GM10248 (cell line): ENCODE measurements at regions of chr3 and their contacts with region 1.

Region 1: DNA sequence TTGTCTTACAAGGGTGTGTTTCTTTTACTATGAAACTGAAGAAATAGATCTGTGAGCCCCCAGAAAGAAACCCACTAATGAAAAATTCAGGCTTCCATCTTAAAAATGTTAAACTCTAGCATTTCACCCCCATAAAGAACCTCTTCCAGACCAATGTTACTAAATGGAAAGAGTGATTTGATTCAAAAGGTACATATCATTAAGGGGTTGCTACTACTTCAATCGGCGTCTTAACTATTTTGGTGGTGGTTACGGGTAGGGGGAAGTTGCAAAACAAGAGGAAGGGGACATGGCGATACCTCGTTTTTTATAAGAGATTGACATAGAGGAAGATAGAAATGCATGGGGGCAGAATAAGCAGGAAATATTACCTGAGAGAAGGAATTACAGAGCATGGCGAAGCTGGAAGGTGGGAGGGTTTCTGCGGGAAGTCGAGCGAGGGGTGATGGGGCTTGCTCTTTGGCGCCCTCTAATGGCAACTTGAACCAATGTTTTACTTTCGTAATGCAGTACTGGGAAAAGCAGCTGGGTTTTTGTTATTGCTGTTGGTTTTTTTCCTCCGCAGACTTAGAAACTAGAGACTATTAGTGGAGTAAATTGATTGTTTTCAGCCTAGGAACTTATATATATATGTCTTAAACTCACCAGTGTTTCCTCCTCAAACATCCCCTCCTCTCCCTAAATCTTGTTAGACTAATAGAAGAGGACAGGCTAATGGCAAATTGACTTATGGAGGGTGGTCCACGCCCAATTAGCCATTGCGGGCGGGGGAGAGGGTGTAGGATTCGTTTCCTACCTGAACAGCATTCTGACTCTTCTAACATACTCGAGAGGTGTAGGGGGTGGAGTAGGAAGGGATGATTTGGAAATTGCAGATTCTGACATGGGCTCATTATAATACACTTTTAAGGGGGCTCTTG is 11.3 kb upstream of the SOX2 start:
- DNase-seq: peak; percentile 70
- CTCF ChIP-seq: peak; percentile 77

Region 2: DNA sequence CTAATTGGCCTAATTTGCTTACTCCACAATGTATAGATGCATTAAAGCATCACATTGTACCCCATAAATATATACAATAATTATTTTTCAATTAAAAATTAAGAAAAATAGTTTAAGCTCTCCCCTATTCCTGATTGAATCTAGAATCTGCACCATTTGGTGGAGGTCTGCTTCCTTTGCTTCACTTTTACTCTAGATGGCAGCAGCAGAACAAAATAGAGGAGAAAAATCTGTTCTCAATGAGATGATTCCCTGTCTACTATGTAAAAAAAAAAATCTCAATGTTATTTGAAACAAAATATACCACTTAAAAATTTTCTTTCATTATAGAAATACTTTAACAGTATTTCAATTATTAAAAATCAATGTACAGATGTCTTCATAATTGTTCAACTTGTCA is 897.6 kb before region 1 on chr3:
- CTCF ChIA-PET with region 1: interaction called, 10 read pairs
- POLR2A ChIA-PET with region 1: no interaction called
- DNase-seq: no peak
- CTCF ChIP-seq: peak; percentile 40

Region 3: GRCh38 chr3:181326637-181327223 is 373.7 kb before region 1 on chr3:
- CTCF ChIA-PET with region 1: interaction called, 38 read pairs
- POLR2A ChIA-PET with region 1: no interaction called
- DNase-seq: peak; percentile 34
- CTCF ChIP-seq: peak; percentile 65

Region 4: GRCh38 chr3:181486141-181486885 is 214.1 kb before region 1 on chr3:
- CTCF ChIA-PET with region 1: no interaction called
- POLR2A ChIA-PET with region 1: no interaction called
- DNase-seq: no peak
- CTCF ChIP-seq: no peak

Region 5: GRCh38 chr3:181718987-181719911 is 18.8 kb after region 1 on chr3:
- CTCF ChIA-PET with region 1: interaction called, 49 read pairs
- POLR2A ChIA-PET with region 1: no interaction called
- DNase-seq: no peak
- CTCF ChIP-seq: no peak

Region 6: GRCh38 chr3:182683453-182683852 is 983.0 kb after region 1 on chr3:
- CTCF ChIA-PET with region 1: interaction called, 20 read pairs
- POLR2A ChIA-PET with region 1: no interaction called
- DNase-seq: peak; percentile 72
- CTCF ChIP-seq: peak; percentile 85